ENCODE measurements at regions of chr3 and their contacts with region 1.

Region 1: DNA sequence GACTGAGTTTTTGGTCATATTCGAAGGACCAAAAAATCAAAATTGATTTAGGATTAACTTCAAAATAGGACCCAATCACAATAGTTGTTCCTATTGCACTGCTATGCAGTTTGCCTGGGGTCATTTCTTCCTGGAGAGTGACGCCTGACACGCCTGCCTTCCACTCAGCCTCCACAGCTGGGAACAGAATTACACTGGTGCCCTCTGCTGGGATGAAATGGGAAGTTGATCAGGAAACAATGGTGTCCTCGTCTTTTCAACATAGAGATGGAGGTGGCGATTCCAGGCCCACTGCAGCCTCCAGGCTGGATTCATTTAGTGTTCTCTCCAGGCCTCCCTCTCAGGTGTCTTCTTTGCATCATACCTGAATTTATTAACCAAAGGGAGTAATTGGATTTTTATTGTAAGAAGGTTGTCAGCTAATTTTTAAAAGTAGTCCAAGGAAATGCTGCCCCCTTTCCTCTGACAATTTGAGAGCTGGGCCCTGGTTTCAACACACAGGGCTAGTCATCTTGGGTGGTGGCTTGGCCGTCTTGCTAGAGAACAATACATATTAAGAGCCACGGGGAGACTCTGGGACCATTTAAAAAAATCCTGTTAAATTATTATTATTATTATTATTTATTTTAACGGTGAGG is 69.7 kb downstream of the GAP43 start:
- DNase-seq: peak; percentile 92
- H3K4me3 ChIP-seq: no peak overlapping the region
- H3K27ac ChIP-seq: no peak overlapping the region
- H3K4me1 ChIP-seq: peaks cover 4% of the 10 kb centered on the region
- H3K27me3 ChIP-seq: no peaks in the 10 kb centered on the region
- CTCF ChIP-seq: peak; percentile 85

Region 2: DNA sequence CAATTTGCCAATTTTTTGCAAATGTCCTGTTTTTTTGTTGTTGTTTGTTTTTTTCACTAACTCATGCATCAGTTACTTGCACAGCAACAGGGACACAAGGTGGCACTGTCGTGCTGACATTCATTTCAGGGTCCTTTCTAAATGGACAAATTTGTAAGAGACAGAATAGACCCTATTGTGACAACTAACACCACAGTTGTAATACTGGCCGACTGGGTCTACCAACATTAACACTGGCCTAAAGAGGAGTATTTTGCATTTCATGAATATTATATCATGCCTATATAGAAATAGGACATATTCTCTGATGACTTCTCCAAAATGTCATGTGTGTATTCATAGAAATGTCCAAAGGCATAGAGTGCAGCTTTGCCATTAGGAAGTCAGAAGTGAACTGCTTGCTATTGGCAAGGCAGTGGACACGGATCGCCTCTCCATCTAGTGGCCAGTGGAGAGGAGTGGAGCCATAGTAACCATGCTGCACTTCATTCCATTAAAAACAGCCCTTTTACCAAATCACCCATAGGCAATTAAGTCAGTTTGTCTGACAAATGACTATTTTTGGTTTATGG is 600.7 kb before region 1 on chr3:
- CTCF ChIA-PET with region 1: no interaction called
- POLR2A ChIA-PET with region 1: no interaction called
- intact Hi-C with region 1: loop called (anchors 5 kb)
- DNase-seq: peak; percentile 76
- H3K4me3 ChIP-seq: no peak overlapping the region
- H3K27ac ChIP-seq: no peak overlapping the region
- H3K4me1 ChIP-seq: no peaks in the 10 kb centered on the region
- H3K27me3 ChIP-seq: no peaks in the 10 kb centered on the region
- CTCF ChIP-seq: peak; percentile 77

Region 3: GRCh38 chr3:115169808-115170207 is 523.2 kb before region 1 on chr3:
- CTCF ChIA-PET with region 1: no interaction called
- POLR2A ChIA-PET with region 1: no interaction called
- intact Hi-C with region 1: no loop called
- DNase-seq: no peak
- H3K4me3 ChIP-seq: no peak overlapping the region
- H3K27ac ChIP-seq: no peak overlapping the region
- H3K4me1 ChIP-seq: no peaks in the 10 kb centered on the region
- H3K27me3 ChIP-seq: no peaks in the 10 kb centered on the region
- CTCF ChIP-seq: no peak; the same call in 1 of the 2 replicates

Region 4: GRCh38 chr3:115321400-115321805 is 371.6 kb before region 1 on chr3:
- CTCF ChIA-PET with region 1: no interaction called
- POLR2A ChIA-PET with region 1: no interaction called
- intact Hi-C with region 1: loop called (anchors 2 kb)
- DNase-seq: peak; percentile 97
- H3K4me3 ChIP-seq: no peak overlapping the region
- H3K27ac ChIP-seq: no peak overlapping the region
- H3K4me1 ChIP-seq: peaks cover 32% of the 10 kb centered on the region
- H3K27me3 ChIP-seq: no peaks in the 10 kb centered on the region
- CTCF ChIP-seq: no peak

Region 5: GRCh38 chr3:115783938-115784738 is 91.1 kb after region 1 on chr3:
- CTCF ChIA-PET with region 1: interaction called, 6 read pairs
- POLR2A ChIA-PET with region 1: no interaction called
- intact Hi-C with region 1: loop called (anchors 1 kb)
- DNase-seq: peak; percentile 96
- H3K4me3 ChIP-seq: peak overlapping the region; percentile 74
- H3K27ac ChIP-seq: peak overlapping the region; percentile 73
- H3K4me1 ChIP-seq: peaks cover 3% of the 10 kb centered on the region
- H3K27me3 ChIP-seq: no peaks in the 10 kb centered on the region
- CTCF ChIP-seq: peak; percentile 99

Region 6: GRCh38 chr3:116112696-116113095 is 419.7 kb after region 1 on chr3:
- CTCF ChIA-PET with region 1: no interaction called
- POLR2A ChIA-PET with region 1: no interaction called
- intact Hi-C with region 1: no loop called
- DNase-seq: peak; percentile 65
- H3K4me3 ChIP-seq: no peak overlapping the region
- H3K27ac ChIP-seq: no peak overlapping the region
- H3K4me1 ChIP-seq: peaks cover 34% of the 10 kb centered on the region
- H3K27me3 ChIP-seq: no peaks in the 10 kb centered on the region
- CTCF ChIP-seq: no peak

Region 7: GRCh38 chr3:116155841-116156240 is 462.8 kb after region 1 on chr3:
- CTCF ChIA-PET with region 1: no interaction called
- POLR2A ChIA-PET with region 1: no interaction called
- intact Hi-C with region 1: no loop called
- DNase-seq: no peak
- H3K4me3 ChIP-seq: no peak overlapping the region
- H3K27ac ChIP-seq: no peak overlapping the region
- H3K4me1 ChIP-seq: peaks cover 13% of the 10 kb centered on the region
- H3K27me3 ChIP-seq: no peaks in the 10 kb centered on the region
- CTCF ChIP-seq: no peak

Measured in A673 (cell line).